ENCODE measurements at regions of chr10 and their contacts with region 1.

Region 1: GRCh38 chr10:84352251-84352842 is 24.0 kb downstream of the CCSER2 start:
- DNase-seq: no peak
- H3K4me3 ChIP-seq: no peak overlapping the region
- CTCF ChIP-seq: peak; percentile 86

Region 2: DNA sequence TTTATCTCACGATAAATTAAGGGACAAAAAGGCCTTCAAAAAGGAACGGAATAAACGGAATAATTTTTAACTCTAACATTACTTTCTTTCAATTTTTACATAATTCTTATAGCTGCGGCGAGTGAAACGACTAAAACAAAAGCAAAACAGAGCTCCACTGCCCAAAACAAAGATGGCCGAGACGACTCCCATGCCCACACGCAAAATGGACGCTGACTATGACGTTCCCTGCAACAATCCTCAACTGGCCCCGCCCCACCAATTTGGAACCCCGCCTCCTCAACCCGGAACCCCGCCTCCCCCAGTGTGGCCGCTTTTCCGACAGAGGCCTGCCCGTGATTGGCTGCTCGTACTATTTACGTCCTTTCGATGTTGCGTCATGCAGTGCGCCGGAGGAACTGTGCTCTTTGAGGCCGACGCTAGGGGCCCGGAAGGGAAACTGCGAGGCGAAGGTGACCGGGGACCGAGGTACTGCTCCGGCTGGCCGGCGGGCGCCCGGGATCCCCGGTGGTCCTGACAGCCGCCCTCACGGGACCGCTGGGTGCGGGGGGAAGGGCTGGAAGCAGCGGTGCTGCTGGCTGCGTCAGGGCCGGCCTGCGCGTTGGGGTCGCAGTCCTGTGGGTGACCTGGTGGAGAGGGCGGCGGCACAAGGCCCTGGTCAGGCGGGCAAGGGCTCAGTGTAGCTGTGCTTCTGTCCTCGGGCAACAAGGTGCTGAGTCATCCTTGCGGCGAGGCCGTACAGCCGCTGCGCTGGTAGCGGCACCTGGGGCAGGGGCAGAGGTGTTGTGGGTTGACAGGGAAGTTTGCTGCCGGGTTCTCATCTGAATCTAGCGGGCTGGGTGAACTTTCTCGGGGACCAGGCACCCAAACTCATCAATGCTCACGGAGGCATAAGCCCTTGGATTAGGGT is 213.0 kb before region 1 on chr10 and contains the start of gene GHITM:
- CTCF ChIA-PET with region 1: no interaction called
- POLR2A ChIA-PET with region 1: no interaction called
- DNase-seq: peak; percentile 90
- H3K4me3 ChIP-seq: peak within 1 kb of the TSS; percentile 99
- CTCF ChIP-seq: peak; percentile 58

Region 3: GRCh38 chr10:84264611-84265141 is 87.7 kb before region 1 on chr10:
- CTCF ChIA-PET with region 1: interaction called, 87 read pairs
- POLR2A ChIA-PET with region 1: no interaction called
- DNase-seq: no peak
- H3K4me3 ChIP-seq: no peak overlapping the region
- CTCF ChIP-seq: peak; percentile 98

Region 4: GRCh38 chr10:84328418-84329195 is 23.7 kb before region 1 on chr10 and contains the start of gene CCSER2:
- CTCF ChIA-PET with region 1: interaction called, 11 read pairs
- POLR2A ChIA-PET with region 1: no interaction called
- DNase-seq: no peak
- H3K4me3 ChIP-seq: peak within 1 kb of the TSS; percentile 67
- CTCF ChIP-seq: peak; percentile 9

Region 5: GRCh38 chr10:84333864-84334451 is 18.4 kb before region 1 on chr10:
- CTCF ChIA-PET with region 1: interaction called, 43 read pairs
- POLR2A ChIA-PET with region 1: no interaction called
- DNase-seq: no peak
- H3K4me3 ChIP-seq: no peak overlapping the region
- CTCF ChIP-seq: no peak

Region 6: DNA sequence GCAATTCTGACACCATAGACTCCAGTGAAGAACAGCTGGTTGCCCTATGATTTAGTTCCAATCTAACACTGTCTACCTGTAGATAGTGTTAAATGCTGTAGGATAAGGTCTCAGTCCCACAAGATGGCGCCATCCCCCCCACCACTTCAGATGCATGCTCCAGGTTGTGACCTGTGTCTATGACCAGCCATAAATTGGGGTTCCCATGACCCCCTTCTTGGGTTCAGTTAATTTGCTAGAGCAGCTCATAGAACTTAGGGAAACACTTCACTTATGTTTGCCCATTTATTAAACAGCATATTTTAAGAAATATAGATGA is 10.8 kb before region 1 on chr10:
- CTCF ChIA-PET with region 1: interaction called, 43 read pairs
- POLR2A ChIA-PET with region 1: no interaction called
- DNase-seq: no peak
- H3K4me3 ChIP-seq: no peak overlapping the region
- CTCF ChIP-seq: no peak

Measured in AG04449 (cell line).